MCF 10A (cell line): ENCODE measurements at regions of chr13 and their contacts with region 1.

Region 1: DNA sequence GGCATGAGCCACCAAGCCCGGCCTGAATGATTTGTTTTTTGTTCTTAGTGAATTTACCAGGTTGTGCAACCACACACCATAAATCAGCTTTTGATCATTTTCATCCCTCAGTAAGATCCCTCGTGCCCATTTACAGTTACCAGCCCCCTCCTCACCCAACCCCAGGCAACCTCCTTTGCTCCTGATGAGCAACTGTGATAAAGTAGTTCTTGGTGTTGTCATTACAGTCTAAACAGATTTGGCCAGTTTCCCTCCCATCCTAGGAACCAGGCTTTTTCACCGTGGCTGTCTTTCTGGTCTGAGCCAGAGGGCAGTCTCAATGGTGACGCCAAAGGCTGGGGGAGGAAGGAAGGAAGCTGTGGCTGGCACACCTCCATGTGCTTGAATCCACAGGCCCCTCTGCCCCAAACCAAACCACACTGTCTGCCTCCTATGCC is 61.2 kb upstream of the WDFY2 start:
- DNase-seq: peak; percentile 96
- H3K4me3 Mint-ChIP-seq: peak overlapping the region; percentile 25
- H3K27ac Mint-ChIP-seq: no peak overlapping the region
- H3K4me1 Mint-ChIP-seq: peaks cover 25% of the 10 kb centered on the region
- H3K27me3 Mint-ChIP-seq: no peaks in the 10 kb centered on the region
- CTCF ChIP-seq: no peak

Region 2: GRCh38 chr13:51534041-51534817 is 11.1 kb after region 1 on chr13:
- CTCF ChIA-PET with region 1: interaction called, 6 read pairs
- POLR2A ChIA-PET with region 1: interaction called, 20 read pairs
- intact Hi-C with region 1: no loop called
- DNase-seq: peak; percentile 62
- H3K4me3 Mint-ChIP-seq: no peak overlapping the region
- H3K27ac Mint-ChIP-seq: peak overlapping the region; percentile 89
- H3K4me1 Mint-ChIP-seq: peaks cover 13% of the 10 kb centered on the region
- H3K27me3 Mint-ChIP-seq: no peaks in the 10 kb centered on the region
- CTCF ChIP-seq: no peak